Transverse colon (tissue), 4 donors: ENCODE measurements at regions of chr3 and their contacts with region 1.

Region 1: GRCh38 chr3:57755668-57756527 is at the start of gene SLMAP:
- DNase-seq: peak; percentile 98
- H3K4me3 ChIP-seq: peak within 1 kb of the TSS; percentile 83 to 93 (median 93)
- H3K27ac ChIP-seq: peak within 1 kb of the TSS; percentile 89 to 93 (median 92)
- H3K4me1 ChIP-seq: peaks cover 4 to 50% (median 24%) of the 10 kb centered on the region in 4 donors
- H3K27me3 ChIP-seq: no peaks in the 10 kb centered on the region
- CTCF ChIP-seq: peak in 1 of 5 experiments; percentile 3
- EP300 ChIP-seq: no peak
- POLR2A ChIP-seq: peak; percentile 91
- total RNA-seq, gene SLMAP: 111 to 162 (median 119) TPM

Region 2: DNA sequence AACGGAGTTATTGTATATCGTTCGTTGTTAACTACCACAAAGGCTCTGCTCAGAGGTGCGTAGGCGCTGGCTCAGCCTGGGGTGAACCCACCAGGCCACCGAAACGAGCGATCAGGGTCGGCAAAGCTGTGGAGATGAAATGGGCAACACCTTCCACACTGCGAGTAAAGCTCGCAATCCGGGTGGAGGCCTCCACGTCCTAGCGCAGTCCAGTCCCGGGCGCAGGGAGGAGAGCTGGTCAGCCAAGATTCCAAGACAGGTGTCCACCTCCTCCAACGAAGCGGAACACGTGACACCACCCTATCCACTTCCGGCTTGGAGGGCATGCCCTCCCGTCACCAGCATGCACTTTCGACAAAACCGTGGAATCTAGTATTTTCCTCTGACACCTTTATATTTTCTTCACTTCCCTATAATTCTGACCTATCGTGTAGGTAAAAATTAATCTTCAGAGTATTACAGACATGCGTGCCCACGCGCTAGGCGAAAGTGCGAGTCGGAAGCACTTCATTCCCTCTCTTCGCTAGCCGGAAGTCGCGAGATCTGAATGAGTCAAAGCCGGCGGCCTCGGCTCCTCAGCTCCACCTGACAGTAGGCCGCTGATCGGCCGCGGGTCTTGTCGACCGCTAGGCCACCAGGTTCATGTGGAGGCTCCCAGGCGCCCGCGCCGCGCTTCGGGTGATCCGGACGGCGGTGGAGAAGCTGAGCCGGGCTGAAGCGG is 200.0 kb before region 1 on chr3 and contains the start of gene PDE12:
- in situ Hi-C with region 1: loop called in 1 of 4 experiments (anchors 10 kb)
- intact Hi-C with region 1: no loop called
- DNase-seq: peak; percentile 90
- H3K4me3 ChIP-seq: peak within 1 kb of the TSS; percentile 61 to 91 (median 76)
- H3K27ac ChIP-seq: peak within 1 kb of the TSS; percentile 90 to 95 (median 92)
- H3K4me1 ChIP-seq: peaks cover 19 to 31% (median 22%) of the 10 kb centered on the region in 4 donors
- H3K27me3 ChIP-seq: no peaks in the 10 kb centered on the region
- CTCF ChIP-seq: no peak
- EP300 ChIP-seq: no peak
- POLR2A ChIP-seq: peak; percentile 92
- total RNA-seq, gene PDE12: 4.2 to 34.8 (median 19.3) TPM

Region 3: DNA sequence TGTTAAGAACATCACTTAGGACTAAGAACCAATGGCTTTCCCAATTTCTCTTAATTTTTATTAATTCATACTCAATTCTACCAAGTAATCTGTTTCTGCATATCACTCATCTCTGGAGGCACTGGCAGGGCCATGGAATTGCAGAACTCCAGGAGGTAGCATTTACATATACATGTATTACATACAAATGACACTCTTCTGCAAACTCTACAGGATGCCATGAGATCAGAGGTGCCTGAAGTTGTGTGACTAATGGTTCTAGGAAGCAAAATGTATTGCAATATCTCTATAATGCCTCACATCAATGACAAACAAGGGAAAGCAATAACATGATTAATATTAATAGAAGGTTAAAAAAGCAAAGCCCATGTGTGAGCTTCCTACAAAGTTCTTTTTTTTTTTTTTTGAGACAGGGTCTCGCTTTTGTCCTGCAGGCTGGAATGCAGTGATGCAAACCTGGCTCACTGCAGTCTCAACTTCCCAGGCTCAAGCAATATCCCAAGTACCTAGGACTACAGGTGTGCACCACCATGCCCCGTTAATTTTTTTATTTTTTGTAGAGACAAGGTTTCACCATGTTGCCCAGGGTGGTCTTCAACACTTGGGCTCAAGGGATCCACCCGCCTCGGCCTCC is 96.0 kb before region 1 on chr3:
- in situ Hi-C with region 1: no loop called
- intact Hi-C with region 1: loop called (anchors 10 kb)
- DNase-seq: no peak
- H3K4me3 ChIP-seq: no peak overlapping the region
- H3K27ac ChIP-seq: no peak overlapping the region
- H3K4me1 ChIP-seq: peaks cover 0 to 6% (median 0%) of the 10 kb centered on the region in 4 donors
- H3K27me3 ChIP-seq: no peaks in the 10 kb centered on the region
- CTCF ChIP-seq: no peak
- EP300 ChIP-seq: no peak
- POLR2A ChIP-seq: no peak

Region 4: DNA sequence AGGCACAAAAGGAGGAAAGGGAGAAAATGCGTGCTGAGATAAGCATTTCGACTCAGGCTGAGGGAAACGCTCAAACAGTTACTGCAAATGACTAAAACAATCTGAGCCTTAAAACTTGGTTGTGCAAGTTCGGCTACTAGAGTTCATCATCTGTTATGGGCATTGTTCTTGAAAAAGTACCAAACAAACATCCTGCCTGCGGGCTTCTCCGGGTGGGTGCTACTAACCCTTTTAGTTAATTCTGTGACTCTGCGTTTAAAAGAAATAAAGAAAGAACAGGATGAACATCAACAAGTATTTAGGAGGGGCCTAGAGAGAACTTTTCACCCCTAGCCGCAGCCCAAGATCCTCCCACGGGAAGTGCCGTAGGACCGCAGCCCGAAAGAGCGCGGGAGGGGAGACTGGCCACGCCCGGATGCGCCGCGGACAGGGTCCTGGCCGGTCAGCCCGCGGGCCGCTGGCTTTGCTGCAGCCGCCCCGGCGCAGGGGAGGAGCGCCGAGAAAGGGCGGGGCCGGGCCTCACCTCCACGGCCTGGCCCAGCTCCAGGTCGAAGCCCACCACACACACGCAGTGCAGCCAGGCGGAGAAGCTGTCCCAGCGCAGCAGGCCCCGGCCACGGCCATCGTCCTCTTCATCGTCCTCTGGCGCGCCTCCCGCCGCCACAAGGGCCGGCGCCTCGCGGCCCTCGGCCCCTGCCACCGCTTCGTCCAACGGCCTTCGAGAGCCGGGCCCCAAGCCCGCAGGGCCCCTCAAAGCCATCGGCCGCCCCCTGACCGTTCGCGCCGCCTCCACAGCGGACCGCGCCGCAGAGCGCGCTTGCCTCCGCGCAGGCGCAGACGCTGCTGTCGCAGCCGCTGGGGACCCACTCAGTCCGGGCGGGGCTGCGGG is 63.4 kb before region 1 on chr3 and contains the start of gene DENND6A:
- in situ Hi-C with region 1: loop called in 1 of 4 experiments (anchors 10 kb)
- intact Hi-C with region 1: no loop called
- DNase-seq: peak; percentile 85
- H3K4me3 ChIP-seq: peak within 1 kb of the TSS; percentile 70 to 100 (median 90)
- H3K27ac ChIP-seq: peak within 1 kb of the TSS; percentile 98 to 100 (median 100)
- H3K4me1 ChIP-seq: peaks cover 13 to 47% (median 21%) of the 10 kb centered on the region in 4 donors
- H3K27me3 ChIP-seq: no peaks in the 10 kb centered on the region
- CTCF ChIP-seq: no peak
- EP300 ChIP-seq: no peak
- POLR2A ChIP-seq: peak; percentile 96
- total RNA-seq, gene DENND6A: 9.4 to 29.7 (median 18.9) TPM